CD8-positive, alpha-beta T cell (primary cell): ENCODE measurements at regions of chr6 and their contacts with region 1.

Region 1: GRCh38 chr6:65851785-65852184 is 144.8 kb upstream of the EYS start:
- DNase-seq: no peak
- ATAC-seq: no peak
- H3K4me3 ChIP-seq: no peak overlapping the region
- H3K4me3 Mint-ChIP-seq: no peak overlapping the region
- H3K27ac ChIP-seq: no peak overlapping the region
- H3K27ac Mint-ChIP-seq: no peak overlapping the region
- H3K4me1 ChIP-seq: no peaks in the 10 kb centered on the region
- H3K4me1 Mint-ChIP-seq: no peaks in the 10 kb centered on the region
- H3K27me3 ChIP-seq: no peaks in the 10 kb centered on the region
- H3K27me3 Mint-ChIP-seq: no peaks in the 10 kb centered on the region
- CTCF ChIP-seq: no peak

Region 2: GRCh38 chr6:64949257-64949656 is 902.5 kb before region 1 on chr6:
- CTCF ChIA-PET with region 1: no interaction called
- POLR2A ChIA-PET with region 1: no interaction called
- intact Hi-C with region 1: loop called in 1 of 2 experiments (anchors 5 kb)
- DNase-seq: no peak
- ATAC-seq: no peak
- H3K4me3 ChIP-seq: no peak overlapping the region
- H3K4me3 Mint-ChIP-seq: no peak overlapping the region
- H3K27ac ChIP-seq: no peak overlapping the region
- H3K27ac Mint-ChIP-seq: no peak overlapping the region
- H3K4me1 ChIP-seq: no peaks in the 10 kb centered on the region
- H3K4me1 Mint-ChIP-seq: no peaks in the 10 kb centered on the region
- H3K27me3 ChIP-seq: no peaks in the 10 kb centered on the region
- H3K27me3 Mint-ChIP-seq: no peaks in the 10 kb centered on the region
- CTCF ChIP-seq: no peak

Region 3: DNA sequence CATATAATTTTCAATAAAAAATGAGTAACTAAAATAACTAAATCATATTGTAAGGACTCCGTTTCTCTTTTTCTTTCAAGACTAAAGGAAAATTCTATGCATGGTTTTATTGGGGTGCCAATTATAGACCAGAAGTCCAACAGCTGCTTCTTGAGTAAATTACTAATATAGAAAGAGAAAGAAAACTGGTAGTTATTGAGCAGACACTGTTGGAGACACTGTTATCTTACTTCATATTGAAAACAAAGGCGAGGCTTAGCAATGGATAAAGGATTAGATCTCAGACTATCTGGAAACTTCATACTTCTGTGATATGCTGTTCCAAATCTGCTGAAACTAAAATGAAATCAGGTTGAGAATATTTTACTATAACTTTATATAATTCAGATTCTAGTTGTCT is 24.9 kb after region 1 on chr6:
- CTCF ChIA-PET with region 1: no interaction called
- POLR2A ChIA-PET with region 1: no interaction called
- intact Hi-C with region 1: loop called in 1 of 2 experiments (anchors 1 kb)
- DNase-seq: no peak
- ATAC-seq: no peak
- H3K4me3 ChIP-seq: no peak overlapping the region
- H3K4me3 Mint-ChIP-seq: no peak overlapping the region
- H3K27ac ChIP-seq: no peak overlapping the region
- H3K27ac Mint-ChIP-seq: no peak overlapping the region
- H3K4me1 ChIP-seq: no peaks in the 10 kb centered on the region
- H3K4me1 Mint-ChIP-seq: no peaks in the 10 kb centered on the region
- H3K27me3 ChIP-seq: no peaks in the 10 kb centered on the region
- H3K27me3 Mint-ChIP-seq: no peaks in the 10 kb centered on the region
- CTCF ChIP-seq: no peak

Region 4: DNA sequence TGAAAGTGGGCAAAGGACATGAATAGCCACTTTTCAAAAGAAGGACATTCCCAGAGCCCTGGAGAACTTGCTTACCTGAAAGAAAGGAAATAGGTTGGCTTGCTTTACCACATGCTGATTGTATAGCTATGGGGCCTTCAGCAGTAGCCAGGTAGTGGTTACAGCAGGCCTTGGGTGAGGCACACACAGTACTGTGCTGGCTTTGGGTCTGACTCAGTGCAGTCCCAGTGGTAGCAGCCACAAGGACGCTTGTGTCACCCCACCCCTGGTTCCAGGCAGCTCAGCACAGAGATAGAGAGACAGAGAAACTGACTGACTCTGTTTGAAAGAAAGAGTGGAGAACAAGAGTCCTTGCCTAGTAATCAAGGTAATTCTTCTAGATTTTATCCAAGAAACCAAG is 56.3 kb after region 1 on chr6:
- CTCF ChIA-PET with region 1: no interaction called
- POLR2A ChIA-PET with region 1: no interaction called
- intact Hi-C with region 1: no loop called
- DNase-seq: no peak
- ATAC-seq: no peak
- H3K4me3 ChIP-seq: no peak overlapping the region
- H3K4me3 Mint-ChIP-seq: no peak overlapping the region
- H3K27ac ChIP-seq: no peak overlapping the region
- H3K27ac Mint-ChIP-seq: no peak overlapping the region
- H3K4me1 ChIP-seq: no peaks in the 10 kb centered on the region
- H3K4me1 Mint-ChIP-seq: no peaks in the 10 kb centered on the region
- H3K27me3 ChIP-seq: no peaks in the 10 kb centered on the region
- H3K27me3 Mint-ChIP-seq: no peaks in the 10 kb centered on the region
- CTCF ChIP-seq: no peak